Ascending aorta (tissue), 2 donors: ENCODE measurements at regions of chr9 and their contacts with region 1.

Region 1: DNA sequence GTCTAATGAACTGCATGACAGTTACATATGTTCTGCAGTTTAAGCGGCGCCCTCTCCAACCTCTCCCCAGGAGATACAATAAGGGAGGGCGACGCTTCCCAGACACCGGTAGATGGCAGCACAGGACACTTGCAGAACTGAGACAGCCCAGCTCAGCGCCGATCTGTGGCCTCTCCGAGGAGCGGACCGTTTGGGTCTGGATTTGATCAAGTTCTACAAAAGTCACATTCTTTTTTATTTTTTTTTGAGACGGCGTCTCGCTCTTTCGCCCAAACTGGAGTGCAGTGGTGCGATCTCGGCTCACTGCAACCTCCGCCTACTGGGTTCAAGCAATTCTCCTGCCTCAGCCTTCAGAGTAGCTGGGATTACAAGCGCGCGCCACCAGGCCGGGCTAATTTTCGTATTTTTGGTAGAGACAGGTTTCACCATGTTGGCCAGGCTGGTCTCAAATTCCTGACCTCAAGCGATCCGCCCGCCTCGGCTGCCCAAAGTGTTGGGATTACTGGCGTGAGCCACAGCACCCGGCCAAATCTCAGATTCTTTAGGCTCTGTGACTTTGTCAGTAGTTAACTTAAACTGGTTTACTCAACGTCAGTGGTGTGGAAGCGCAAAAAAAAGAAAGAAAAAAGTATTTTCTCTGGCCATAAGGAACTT is 1.4 kb upstream of the ATOSB start:
- DNase-seq: peak; percentile 83 to 96
- H3K4me3 ChIP-seq: peak overlapping the region; percentile 46 to 62
- H3K27ac ChIP-seq: peak overlapping the region; percentile 98 to 99
- H3K4me1 ChIP-seq: peaks cover 15 to 35% of the 10 kb centered on the region in 2 donors
- H3K27me3 ChIP-seq: no peaks in the 10 kb centered on the region
- CTCF ChIP-seq: peak; percentile 88 to 97 (median 97)

Region 2: DNA sequence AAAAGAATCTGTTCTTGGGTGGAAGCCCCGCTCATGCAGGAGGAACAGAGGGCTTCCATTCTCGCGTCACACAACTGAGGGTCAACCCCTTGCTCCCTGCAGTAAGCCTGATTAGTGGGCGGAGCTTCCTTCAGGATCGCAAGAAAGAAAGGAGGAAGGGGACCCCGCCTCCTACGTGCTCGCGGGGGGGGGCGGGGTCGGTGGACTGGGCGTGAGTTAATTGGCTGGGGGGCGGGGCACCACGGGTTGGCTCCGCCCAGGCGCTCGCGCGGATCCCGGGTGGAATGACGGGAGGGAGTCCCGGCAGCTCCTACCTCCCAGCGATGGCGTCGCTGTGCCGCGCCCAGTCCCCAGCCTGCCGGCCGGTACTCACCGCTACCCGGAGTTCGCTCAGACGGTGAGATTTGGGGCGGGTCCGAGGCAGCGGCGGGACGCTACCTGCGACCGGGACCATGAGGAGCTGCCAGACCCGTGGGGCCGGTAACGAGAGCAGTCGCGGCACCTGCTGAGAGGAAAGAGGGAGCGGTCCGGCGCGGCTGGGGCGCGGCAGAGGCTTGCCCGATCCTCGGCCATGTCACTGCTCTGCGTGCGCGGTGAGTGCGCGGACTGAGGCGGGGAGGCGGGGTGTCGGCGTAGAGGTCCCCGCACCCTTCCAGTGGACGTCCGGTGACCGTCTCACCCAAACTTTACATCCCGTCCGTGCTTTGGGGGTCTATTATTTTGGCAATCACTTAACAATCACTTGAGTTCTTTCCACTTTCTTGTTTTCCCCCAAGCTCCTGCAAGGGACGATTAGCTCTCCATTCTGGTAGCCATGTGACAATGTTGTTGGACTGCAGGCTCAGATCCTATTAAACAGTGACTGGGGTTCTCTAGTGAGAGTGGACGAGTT is 44.9 kb after region 1 on chr9 and contains the start of gene UNC13B:
- intact Hi-C with region 1: loop called (anchors 1 kb)
- DNase-seq: peak; percentile 82 to 97
- H3K4me3 ChIP-seq: peak within 1 kb of the TSS; percentile 80 to 88
- H3K27ac ChIP-seq: peak within 1 kb of the TSS; percentile 89 to 97
- H3K4me1 ChIP-seq: peaks cover 0 to 10% of the 10 kb centered on the region in 2 donors
- H3K27me3 ChIP-seq: no peaks in the 10 kb centered on the region
- CTCF ChIP-seq: peak in 2 of 3 experiments; percentile 25 to 28
- total RNA-seq, gene UNC13B: 26.5 TPM

Region 3: DNA sequence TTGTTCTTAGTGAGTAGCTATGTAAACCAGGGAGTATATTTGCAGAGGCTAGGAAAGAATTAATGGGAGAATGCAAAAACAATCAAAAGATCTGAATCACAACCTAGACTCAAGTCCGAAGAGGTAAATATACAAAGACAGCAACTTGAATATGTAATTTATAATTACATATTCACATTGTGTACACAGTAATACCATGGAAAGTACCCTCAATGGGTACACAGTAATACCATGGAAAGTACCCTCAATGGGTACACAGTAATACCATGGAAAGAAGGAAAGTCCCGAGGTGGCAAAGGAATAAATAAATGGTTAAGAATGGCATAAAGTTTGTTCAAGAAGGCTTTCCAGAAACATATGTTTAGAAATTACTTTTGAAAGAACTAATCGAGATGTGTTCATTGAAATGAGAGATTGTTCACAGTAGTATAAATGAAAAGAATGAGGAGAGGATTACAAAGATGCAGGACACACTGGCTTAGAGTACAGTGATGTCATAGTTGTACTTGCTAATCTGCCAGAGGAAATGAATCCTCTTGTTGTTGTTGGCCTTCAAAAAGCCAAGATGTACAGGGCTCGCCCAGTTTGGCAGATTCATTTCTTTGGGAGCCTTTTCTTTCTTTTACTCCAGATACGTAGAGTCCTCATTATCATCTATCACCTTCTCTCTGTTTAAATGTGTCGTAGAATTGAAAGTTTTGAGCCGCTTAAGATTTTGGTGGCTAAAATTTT is 160.8 kb after region 1 on chr9:
- intact Hi-C with region 1: loop called (anchors 5 kb)
- DNase-seq: no peak
- H3K4me3 ChIP-seq: peak overlapping the region in 1 of 2 donors; percentile 49
- H3K27ac ChIP-seq: peak overlapping the region; percentile 35 to 53
- H3K4me1 ChIP-seq: peaks cover 3 to 9% of the 10 kb centered on the region in 2 donors
- H3K27me3 ChIP-seq: no peaks in the 10 kb centered on the region
- CTCF ChIP-seq: no peak

Region 4: GRCh38 chr9:35481347-35481975 is 364.4 kb after region 1 on chr9:
- intact Hi-C with region 1: loop called (anchors 1 kb)
- DNase-seq: peak in 1 of 2 donors; percentile 76
- H3K4me3 ChIP-seq: no peak overlapping the region
- H3K27ac ChIP-seq: peak overlapping the region in 1 of 2 donors; percentile 49
- H3K4me1 ChIP-seq: no peaks in the 10 kb centered on the region
- H3K27me3 ChIP-seq: no peaks in the 10 kb centered on the region
- CTCF ChIP-seq: peak; percentile 53 to 68 (median 65)

Region 5: DNA sequence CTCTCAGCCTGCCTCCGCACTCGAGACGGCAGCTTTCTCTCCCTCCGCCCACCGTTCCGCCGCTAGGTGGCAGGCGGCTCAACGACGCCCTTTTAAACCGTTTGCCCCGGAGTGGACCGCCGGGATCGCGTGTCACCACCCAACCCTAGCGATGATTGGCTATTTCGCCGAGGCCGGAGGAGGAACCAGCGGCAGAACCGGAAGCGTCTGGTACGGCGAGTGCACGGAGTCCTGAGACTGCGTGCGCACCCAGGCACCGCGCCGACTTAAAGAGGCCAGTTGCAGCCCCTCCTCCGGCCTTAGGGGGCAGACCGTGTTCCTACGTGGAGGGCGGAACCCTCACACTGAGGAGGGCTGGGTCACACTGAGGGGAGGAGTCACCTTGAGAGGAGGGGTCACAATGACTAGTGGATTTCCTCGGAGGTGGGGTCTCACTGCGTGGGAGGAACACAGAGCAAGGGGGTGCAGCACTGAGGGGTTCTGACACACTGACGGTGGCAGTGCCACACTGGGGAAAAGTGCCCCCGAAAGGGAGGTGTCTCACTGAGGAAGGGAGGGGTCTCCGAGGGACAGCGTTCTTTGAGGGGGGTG is 487.1 kb after region 1 on chr9:
- intact Hi-C with region 1: loop called (anchors 2 kb)
- DNase-seq: peak; percentile 98 to 100
- H3K4me3 ChIP-seq: peak overlapping the region; percentile 92 to 97
- H3K27ac ChIP-seq: peak overlapping the region; percentile 93 to 95
- H3K4me1 ChIP-seq: peaks cover 15 to 26% of the 10 kb centered on the region in 2 donors
- H3K27me3 ChIP-seq: no peaks in the 10 kb centered on the region
- CTCF ChIP-seq: peak; percentile 89 to 96 (median 93)

Region 6: GRCh38 chr9:36036780-36037548 is 919.9 kb after region 1 on chr9 and contains the start of gene RECK:
- intact Hi-C with region 1: loop called (anchors 10 kb)
- DNase-seq: peak; percentile 77 to 97
- H3K4me3 ChIP-seq: peak within 1 kb of the TSS; percentile 86 to 95
- H3K27ac ChIP-seq: peak within 1 kb of the TSS; percentile 86 to 88
- H3K4me1 ChIP-seq: peaks cover 0 to 9% of the 10 kb centered on the region in 2 donors
- H3K27me3 ChIP-seq: no peaks in the 10 kb centered on the region
- CTCF ChIP-seq: no peak
- total RNA-seq, gene RECK: 5.7 TPM